Heart right ventricle (tissue), 16 donors: ENCODE measurements at regions of chr2 and their contacts with region 1.

Region 1: DNA sequence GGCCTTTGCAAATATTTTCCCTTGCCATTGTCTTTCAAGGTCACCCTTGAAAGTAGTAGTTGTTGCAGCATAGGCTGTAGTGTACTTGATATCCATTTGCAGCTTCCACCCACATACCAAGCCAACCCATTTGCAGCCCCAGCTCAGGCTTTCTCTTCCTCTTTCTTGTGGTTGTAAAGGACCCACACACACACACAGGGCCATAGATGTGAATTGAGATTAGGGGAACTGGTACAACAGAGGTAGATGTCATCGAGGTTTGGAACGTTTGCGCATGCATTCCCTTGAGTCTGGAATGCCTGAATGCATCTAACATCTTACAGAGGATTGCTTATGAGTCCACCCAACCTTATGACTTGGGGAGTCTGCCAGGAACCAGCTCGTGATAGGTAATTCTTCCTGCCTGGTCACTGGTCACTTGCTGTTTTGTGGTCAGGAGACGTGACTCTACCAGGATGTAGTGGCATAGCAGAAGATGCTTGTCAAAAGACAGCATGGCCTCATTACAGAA is 91.9 kb downstream of the MRPS9 start:
- DNase-seq: no peak
- ATAC-seq: no peak
- H3K4me3 ChIP-seq: no peak overlapping the region
- H3K27ac ChIP-seq: no peak overlapping the region
- H3K4me1 ChIP-seq: no peaks in the 10 kb centered on the region
- H3K27me3 ChIP-seq: peaks cover 0 to 41% (median 9%) of the 10 kb centered on the region in 7 donors
- CTCF ChIP-seq: no peak

Region 2: DNA sequence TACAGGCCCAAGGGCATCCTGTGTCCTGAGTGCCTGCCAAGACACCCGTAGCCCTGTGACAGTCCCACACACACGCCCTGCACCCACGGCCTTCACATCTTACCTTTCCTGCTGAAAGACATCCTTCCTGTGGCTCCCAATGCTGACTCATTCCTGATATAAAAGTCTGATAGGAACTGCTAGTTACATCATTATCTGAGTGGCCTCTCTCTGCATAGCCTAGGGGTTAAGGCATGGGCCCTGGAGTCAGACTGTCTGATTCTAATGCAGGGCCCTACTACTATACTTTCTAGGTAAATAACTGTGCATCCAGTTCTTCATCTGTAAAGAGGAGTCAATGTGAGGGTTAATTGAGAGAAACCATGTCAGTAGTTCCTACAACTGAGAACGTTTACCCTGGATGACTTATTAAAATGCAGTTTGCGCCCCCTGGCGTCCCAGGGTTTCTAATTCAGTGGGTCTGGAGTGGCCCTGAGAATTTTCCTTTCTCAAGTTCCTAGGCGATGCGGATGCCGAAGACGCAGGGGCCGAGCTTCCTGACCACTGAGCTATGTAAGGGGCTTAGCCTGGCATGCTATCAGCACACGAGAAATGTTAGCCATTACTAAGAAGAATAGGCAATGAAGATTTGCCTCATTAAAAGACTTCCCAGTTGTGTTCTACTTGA is 105.7 kb after region 1 on chr2:
- intact Hi-C with region 1: loop called in 1 of 10 experiments (anchors 5 kb)
- DNase-seq: peak; percentile 63 to 67
- ATAC-seq: peak; percentile 39 to 82 (median 72)
- H3K4me3 ChIP-seq: no peak overlapping the region
- H3K27ac ChIP-seq: no peak overlapping the region
- H3K4me1 ChIP-seq: peaks cover 0 to 17% (median 0%) of the 10 kb centered on the region in 9 donors
- H3K27me3 ChIP-seq: peaks cover 0 to 18% (median 11%) of the 10 kb centered on the region in 7 donors
- CTCF ChIP-seq: peak; percentile 38 to 79 (median 75)